Left lung (tissue), 14 donors: ENCODE measurements at regions of chr12 and their contacts with region 1.

Region 1: GRCh38 chr12:7995266-7995963 is 37.1 kb upstream of the FOXJ2 start:
- DNase-seq: peak; percentile 51 to 91 (median 78)
- ATAC-seq: peak; percentile 97
- H3K4me3 ChIP-seq: no peak overlapping the region
- H3K27ac ChIP-seq: peak overlapping the region; percentile 53 to 58
- H3K4me1 ChIP-seq: peaks cover 0 to 38% of the 10 kb centered on the region in 2 donors
- H3K27me3 ChIP-seq: no peaks in the 10 kb centered on the region
- CTCF ChIP-seq: peak; percentile 89 to 94

Region 2: GRCh38 chr12:7859552-7859951 is 135.9 kb before region 1 on chr12:
- intact Hi-C with region 1: loop called in 1 of 2 experiments (anchors 10 kb)
- DNase-seq: no peak
- ATAC-seq: no peak
- H3K4me3 ChIP-seq: no peak overlapping the region
- H3K27ac ChIP-seq: no peak overlapping the region
- H3K4me1 ChIP-seq: peaks cover 0 to 8% of the 10 kb centered on the region in 2 donors
- H3K27me3 ChIP-seq: no peaks in the 10 kb centered on the region
- CTCF ChIP-seq: no peak

Region 3: GRCh38 chr12:7933255-7933729 is 62.1 kb before region 1 on chr12:
- intact Hi-C with region 1: loop called in 1 of 2 experiments (anchors 5 kb)
- DNase-seq: peak in 3 of 4 donors; percentile 69 to 89 (median 72)
- ATAC-seq: peak; percentile 74
- H3K4me3 ChIP-seq: peak overlapping the region; percentile 45 to 75
- H3K27ac ChIP-seq: peak overlapping the region; percentile 84 to 91
- H3K4me1 ChIP-seq: peaks cover 3 to 81% of the 10 kb centered on the region in 2 donors
- H3K27me3 ChIP-seq: no peaks in the 10 kb centered on the region
- CTCF ChIP-seq: peak; percentile 45 to 58